CD8-positive, alpha-beta T cell (primary cell): ENCODE measurements at regions of chr3 and their contacts with region 1.

Region 1: DNA sequence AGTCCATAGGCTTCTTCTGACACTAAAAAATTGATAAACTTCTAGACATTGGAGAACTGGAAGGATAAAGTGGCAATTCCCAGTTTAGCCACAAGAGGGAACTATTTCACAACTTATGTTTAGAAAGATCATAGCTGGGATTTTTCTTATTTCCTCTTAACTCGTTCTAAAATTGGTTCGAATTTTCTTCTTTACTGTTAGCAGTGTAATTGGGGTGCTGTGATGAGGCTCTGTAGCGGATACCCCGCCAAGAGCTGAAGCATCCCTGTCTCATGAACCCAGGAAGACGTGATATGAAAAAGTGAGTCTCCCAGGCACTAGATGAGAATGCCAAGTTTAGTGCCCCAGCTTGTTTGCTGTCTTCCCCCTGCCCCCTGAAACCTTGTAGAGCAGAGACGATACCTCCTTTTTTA is 85.1 kb downstream of the PDCD6IP start:
- DNase-seq: peak in 3 of 9 experiments; percentile 44 to 62 (median 54)
- ATAC-seq: peak; percentile 26
- H3K4me3 ChIP-seq: no peak overlapping the region
- H3K4me3 Mint-ChIP-seq: no peak overlapping the region
- H3K27ac ChIP-seq: no peak overlapping the region
- H3K27ac Mint-ChIP-seq: no peak overlapping the region
- H3K4me1 ChIP-seq: peaks cover 4% of the 10 kb centered on the region
- H3K4me1 Mint-ChIP-seq: peaks cover 4% of the 10 kb centered on the region
- H3K27me3 ChIP-seq: no peaks in the 10 kb centered on the region
- H3K27me3 Mint-ChIP-seq: peaks cover 2% of the 10 kb centered on the region
- CTCF ChIP-seq: peak; percentile 95

Region 2: DNA sequence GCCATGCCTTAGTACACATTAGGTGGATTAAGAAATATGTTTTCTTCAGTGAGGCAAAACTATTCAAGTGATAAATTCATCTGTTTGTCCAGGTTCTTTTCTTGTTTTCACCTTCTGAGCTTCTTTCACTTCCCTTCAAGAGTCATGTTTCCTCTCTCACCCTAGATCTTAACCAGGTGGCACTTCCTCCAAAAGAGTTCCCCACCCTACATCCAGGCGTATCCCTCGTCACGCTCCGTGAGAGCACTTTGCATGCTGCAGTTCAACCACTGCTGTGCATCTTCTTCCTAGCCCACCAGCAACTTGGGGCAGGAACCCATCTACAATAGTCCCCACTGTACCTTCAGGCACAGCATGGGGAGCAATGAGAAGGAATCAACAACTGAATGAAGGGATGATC is 1931.3 kb before region 1 on chr3:
- CTCF ChIA-PET with region 1: no interaction called
- POLR2A ChIA-PET with region 1: no interaction called
- intact Hi-C with region 1: no loop called
- DNase-seq: peak in 1 of 9 experiments; percentile 25
- ATAC-seq: no peak
- H3K4me3 ChIP-seq: no peak overlapping the region
- H3K4me3 Mint-ChIP-seq: no peak overlapping the region
- H3K27ac ChIP-seq: no peak overlapping the region
- H3K27ac Mint-ChIP-seq: no peak overlapping the region
- H3K4me1 ChIP-seq: no peaks in the 10 kb centered on the region
- H3K4me1 Mint-ChIP-seq: peaks cover 2% of the 10 kb centered on the region
- H3K27me3 ChIP-seq: no peaks in the 10 kb centered on the region
- H3K27me3 Mint-ChIP-seq: peaks cover 3% of the 10 kb centered on the region
- CTCF ChIP-seq: no peak

Region 3: GRCh38 chr3:33869977-33870376 is 13.6 kb before region 1 on chr3:
- CTCF ChIA-PET with region 1: interaction called, 25 read pairs
- POLR2A ChIA-PET with region 1: interaction called, 3 read pairs
- intact Hi-C with region 1: no loop called
- DNase-seq: no peak
- ATAC-seq: no peak
- H3K4me3 ChIP-seq: no peak overlapping the region
- H3K4me3 Mint-ChIP-seq: no peak overlapping the region
- H3K27ac ChIP-seq: no peak overlapping the region
- H3K27ac Mint-ChIP-seq: peak overlapping the region; percentile 27
- H3K4me1 ChIP-seq: no peaks in the 10 kb centered on the region
- H3K4me1 Mint-ChIP-seq: no peaks in the 10 kb centered on the region
- H3K27me3 ChIP-seq: no peaks in the 10 kb centered on the region
- H3K27me3 Mint-ChIP-seq: no peaks in the 10 kb centered on the region
- CTCF ChIP-seq: no peak

Region 4: GRCh38 chr3:34683851-34684250 is 800.3 kb after region 1 on chr3:
- CTCF ChIA-PET with region 1: interaction called, 37 read pairs
- POLR2A ChIA-PET with region 1: no interaction called
- intact Hi-C with region 1: loop called in 1 of 2 experiments (anchors 1 kb)
- DNase-seq: peak in 5 of 9 experiments; percentile 18 to 37 (median 29)
- ATAC-seq: no peak
- H3K4me3 ChIP-seq: no peak overlapping the region
- H3K4me3 Mint-ChIP-seq: no peak overlapping the region
- H3K27ac ChIP-seq: no peak overlapping the region
- H3K27ac Mint-ChIP-seq: no peak overlapping the region
- H3K4me1 ChIP-seq: no peaks in the 10 kb centered on the region
- H3K4me1 Mint-ChIP-seq: no peaks in the 10 kb centered on the region
- H3K27me3 ChIP-seq: no peaks in the 10 kb centered on the region
- H3K27me3 Mint-ChIP-seq: no peaks in the 10 kb centered on the region
- CTCF ChIP-seq: no peak